Heart left ventricle (tissue), 16 donors: ENCODE measurements at regions of chr3 and their contacts with region 1.

Region 1: DNA sequence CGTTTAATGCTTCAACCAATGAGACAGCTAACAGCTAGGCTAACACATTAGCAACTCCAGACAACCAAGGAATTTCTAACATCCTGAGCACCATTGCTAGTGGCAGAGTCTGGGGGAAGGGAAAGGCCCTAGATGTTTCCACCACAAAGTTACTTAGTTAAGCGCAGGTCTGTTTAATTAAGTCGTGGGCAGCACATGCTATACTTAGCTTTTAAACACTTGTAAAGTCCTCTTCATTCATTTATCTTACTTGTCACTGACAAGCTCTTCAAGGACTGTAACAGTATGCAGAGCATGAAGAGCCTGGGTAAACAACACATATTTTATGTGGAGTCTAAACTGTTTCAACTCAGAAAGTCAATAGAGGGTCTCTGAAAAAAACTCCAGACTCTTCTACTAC is 221.1 kb upstream of the WNT5A start:
- DNase-seq: no peak
- ATAC-seq: peak in 2 of 4 donors; percentile 34 to 49
- H3K4me3 ChIP-seq: no peak overlapping the region
- H3K27ac ChIP-seq: no peak overlapping the region
- H3K4me1 ChIP-seq: peaks cover 0 to 10% (median 0%) of the 10 kb centered on the region in 12 donors
- H3K27me3 ChIP-seq: peaks cover 0 to 3% (median 0%) of the 10 kb centered on the region in 9 donors
- CTCF ChIP-seq: no peak
- POLR2A ChIP-seq: no peak

Region 2: DNA sequence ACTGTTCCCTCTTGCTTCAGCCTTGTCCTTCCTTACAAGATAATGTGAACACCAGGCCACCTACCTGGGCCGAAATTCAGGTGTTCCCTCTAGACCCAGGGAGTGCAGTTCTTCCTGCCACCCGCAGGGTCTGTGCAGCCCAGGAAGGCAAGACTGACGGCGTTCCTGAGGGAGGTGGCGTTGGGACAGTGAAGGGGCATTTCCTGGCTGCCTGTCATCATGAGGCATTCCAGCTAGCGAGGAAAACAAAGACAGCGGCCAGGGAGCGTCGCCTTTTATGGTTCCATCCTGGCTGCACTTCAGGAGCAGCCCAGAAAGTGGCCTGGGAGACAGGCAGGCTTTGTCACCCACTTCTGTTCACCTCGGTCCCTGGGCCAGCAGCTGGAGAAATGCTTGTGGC is 136.3 kb before region 1 on chr3:
- intact Hi-C with region 1: loop called in 2 of 10 experiments (anchors 2 to 10 kb)
- DNase-seq: peak; percentile 66 to 89 (median 77)
- ATAC-seq: peak; percentile 94 to 98 (median 97)
- H3K4me3 ChIP-seq: no peak overlapping the region
- H3K27ac ChIP-seq: peak overlapping the region in 7 of 12 donors; percentile 22 to 70 (median 56)
- H3K4me1 ChIP-seq: peaks cover 0 to 19% (median 2%) of the 10 kb centered on the region in 12 donors
- H3K27me3 ChIP-seq: no peaks in the 10 kb centered on the region
- CTCF ChIP-seq: peak in 11 of 12 donors; percentile 11 to 61 (median 45)
- POLR2A ChIP-seq: no peak

Region 3: DNA sequence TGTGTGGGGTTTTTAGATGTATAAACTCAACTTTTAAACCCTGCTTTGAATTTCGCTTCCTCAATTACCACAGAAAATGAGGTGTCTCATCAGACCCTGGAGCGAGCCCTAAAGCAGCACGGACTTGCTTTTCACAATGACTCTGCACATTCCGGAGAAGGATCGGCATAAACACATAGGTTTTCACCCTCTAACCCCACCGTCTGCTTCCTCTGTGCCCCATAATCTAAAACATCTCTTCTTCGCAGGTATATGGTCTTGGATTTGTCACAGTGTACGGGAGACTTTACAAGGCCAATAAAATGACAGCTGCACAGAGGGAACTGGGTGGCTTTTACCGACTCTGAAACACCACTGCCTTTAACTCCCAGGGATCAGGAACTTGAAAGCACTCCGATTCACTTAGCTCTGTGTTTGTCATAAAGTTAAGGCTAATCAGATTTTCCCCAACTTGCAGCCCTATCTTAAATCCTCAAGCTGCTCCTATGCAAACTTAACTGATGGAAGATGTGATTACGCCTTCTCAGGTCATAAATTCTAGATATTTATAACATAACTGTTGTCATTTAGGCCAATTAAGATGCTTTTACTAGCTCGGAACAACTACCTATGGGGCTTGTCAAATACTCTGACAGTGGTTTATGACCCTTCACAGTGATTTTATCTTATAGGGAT is 87.8 kb before region 1 on chr3:
- intact Hi-C with region 1: no loop called
- DNase-seq: no peak
- ATAC-seq: no peak
- H3K4me3 ChIP-seq: no peak overlapping the region
- H3K27ac ChIP-seq: no peak overlapping the region
- H3K4me1 ChIP-seq: peaks cover 0 to 16% (median 0%) of the 10 kb centered on the region in 12 donors
- H3K27me3 ChIP-seq: peaks cover 0 to 20% (median 0%) of the 10 kb centered on the region in 9 donors
- CTCF ChIP-seq: no peak
- POLR2A ChIP-seq: no peak